ENCODE measurements at regions of chr17 and their contacts with region 1.

Region 1: DNA sequence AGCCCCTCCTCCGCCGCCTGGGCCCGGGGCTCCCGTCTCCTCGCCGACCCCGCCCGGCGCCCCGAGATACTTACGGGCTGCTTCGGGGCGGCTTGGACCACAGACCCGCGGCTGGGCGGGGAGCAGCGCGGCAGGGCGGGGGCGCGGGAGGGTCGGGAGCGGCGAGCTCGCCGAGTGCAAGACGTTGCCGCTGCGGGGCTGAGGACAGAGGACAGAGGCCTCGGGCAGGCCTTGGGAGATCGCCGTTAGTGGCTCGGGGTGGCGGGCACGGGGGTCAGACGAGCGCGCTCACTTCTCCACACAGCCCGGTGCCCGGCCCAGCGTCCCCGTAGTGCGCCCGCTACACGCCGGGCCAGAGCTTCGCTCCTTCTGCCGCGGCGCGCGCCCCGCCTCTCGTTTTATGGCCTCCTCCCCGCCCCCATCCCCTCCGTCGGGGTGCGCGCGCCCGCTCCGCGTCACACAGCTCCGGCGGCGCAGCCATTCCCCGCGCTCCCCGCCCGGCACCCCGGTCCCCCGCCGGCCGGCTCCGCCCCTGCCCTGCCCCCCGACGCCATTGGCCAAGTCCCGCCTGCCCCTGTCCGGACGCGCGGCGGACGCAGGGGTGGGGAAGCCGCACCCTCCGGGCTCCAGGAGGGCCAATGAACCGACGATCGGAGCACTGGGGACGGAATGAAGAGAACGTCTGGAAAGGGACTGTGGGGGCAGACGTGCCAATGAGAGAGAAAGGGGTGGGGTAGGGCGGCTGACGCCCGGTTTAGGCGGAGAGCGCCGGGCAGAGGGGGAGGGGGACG is at the start of gene TOB1:
- DNase-seq: peak; percentile 90

Region 2: DNA sequence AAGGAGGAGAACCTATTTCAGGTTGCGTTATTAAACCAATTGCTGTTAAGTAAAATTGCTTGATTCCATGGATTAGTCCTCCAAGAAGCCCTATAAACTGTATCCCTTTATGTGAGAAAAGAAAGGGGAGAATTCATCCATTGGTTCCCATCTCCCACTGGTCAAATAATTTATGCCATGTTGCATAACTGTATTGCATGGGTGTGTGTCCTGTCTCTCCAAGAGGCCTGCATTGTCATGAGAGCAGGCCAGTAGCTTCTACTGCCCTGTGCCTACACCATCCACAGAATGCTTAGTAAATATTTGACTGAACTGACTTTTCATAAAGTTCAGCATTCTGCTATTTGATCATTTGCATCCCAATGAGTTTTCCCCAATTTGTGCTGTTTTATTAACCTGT is 11.7 kb after region 1 on chr17:
- CTCF ChIA-PET with region 1: no interaction called
- POLR2A ChIA-PET with region 1: interaction called, 26 read pairs
- DNase-seq: no peak

Region 3: DNA sequence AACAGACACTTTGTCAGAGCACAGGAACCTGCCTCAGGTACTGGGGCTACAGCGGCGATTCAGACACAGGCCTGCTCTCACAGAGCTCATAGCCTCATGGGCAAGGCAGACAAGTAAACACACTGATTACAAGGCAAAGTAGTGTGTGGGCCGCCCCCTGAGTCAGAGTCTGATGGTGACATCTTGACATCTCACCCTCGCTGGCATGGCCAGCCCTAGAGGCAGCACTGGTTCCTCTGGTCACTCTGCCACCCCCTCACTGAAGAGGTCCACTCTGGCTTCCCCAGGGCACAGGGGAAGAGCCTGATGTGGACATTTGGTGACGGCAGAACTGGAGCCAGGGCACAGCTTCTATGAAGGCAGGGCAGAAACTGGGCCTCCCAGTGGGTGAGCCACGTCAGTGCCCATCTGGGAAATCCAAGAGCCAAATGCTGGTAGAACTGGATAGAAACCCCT is 32.9 kb after region 1 on chr17:
- CTCF ChIA-PET with region 1: interaction called, 3 read pairs
- POLR2A ChIA-PET with region 1: interaction called, 60 read pairs
- DNase-seq: no peak

Region 4: DNA sequence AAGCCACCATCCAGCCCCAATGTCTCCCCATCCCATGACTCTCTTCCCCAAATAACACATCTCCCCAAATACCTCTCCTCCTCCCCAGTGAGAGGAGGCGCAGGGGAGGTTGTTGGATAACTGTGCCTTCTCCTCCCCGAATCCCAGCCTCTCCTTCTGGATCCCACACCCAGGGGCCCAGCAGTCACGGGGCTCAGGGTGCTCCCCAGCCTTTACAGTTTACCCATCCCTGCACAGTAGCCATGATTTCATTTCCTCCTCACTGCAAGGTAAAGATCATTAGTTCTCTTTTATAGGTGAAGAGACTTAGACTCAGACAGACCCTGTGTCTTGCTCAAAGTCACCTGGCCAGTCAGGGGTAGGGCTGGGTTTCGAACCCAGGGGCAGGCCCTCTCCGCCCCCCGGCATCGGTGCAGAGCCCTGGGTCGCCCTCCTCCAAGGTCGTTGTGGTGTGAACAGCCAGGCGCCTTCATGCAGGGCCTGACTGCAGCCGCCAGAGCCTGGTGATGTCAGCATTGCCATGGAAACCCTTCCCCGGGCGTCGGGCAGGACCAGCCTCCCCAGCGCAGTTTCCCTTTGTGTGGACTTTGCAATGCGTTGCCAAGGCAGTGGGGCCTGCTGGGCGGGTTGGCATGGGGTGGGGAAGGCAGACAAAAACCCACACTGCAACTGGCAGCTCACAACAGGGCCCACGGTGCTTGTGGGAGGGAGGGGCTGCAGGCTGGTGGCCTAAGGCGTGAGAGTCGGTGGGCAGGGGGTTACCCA is 53.3 kb after region 1 on chr17:
- CTCF ChIA-PET with region 1: no interaction called
- POLR2A ChIA-PET with region 1: interaction called, 21 read pairs
- DNase-seq: peak; percentile 55

Region 5: DNA sequence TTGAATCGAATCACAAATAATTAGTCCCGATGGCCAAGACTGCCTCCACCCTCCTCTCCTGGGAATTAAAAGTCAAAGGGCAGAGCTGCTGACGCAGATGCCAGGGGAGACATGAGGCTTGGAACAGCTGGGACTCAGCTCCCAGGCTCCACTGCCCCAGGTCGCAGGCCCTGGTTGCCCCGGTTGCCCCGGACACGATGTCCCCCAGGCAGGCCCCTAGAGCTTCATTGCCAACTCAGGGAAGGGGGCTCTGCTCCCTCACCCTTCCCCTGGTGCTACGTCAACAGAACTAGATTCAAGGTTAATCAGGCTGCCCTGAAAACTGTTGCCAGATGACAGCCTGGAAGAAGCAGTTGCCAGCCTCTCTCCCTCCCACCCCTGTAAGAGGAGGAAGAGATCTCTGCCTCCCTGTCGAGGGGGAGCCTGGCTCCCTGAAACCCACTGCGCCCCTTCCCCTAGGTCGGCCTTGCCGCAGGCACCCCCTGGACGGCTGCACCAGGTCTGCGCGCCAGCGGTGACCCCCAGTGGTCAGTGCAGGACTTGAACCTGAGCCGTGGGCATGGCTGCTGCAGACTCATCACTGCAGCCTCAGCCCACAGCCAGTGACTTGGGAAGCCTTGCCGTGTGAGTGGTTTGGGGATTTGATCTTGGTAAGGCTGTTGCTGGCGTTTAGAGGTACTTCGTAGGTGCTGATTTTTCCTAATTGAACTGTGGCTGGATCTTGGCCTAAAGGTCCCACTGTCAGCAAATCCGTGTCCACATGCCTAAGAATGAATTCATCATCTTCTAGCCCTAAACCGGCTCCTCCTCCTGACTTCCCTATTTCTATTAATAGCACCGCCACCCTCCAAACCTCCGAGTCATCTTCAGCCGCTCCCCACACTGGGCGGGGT is 84.1 kb after region 1 on chr17:
- CTCF ChIA-PET with region 1: interaction called, 23 read pairs
- POLR2A ChIA-PET with region 1: interaction called, 93 read pairs
- DNase-seq: peak; percentile 62